Ovary (tissue), 10 donors: ENCODE measurements at regions of chr7 and their contacts with region 1.

Region 1: GRCh38 chr7:77759294-77759889 is 38.8 kb downstream of the TMEM60 start:
- DNase-seq: peak in 3 of 5 donors; percentile 41 to 78 (median 52)
- H3K4me3 ChIP-seq: no peak overlapping the region
- H3K27ac ChIP-seq: no peak overlapping the region
- H3K4me1 ChIP-seq: peaks cover 2% of the 10 kb centered on the region
- H3K27me3 ChIP-seq: no peaks in the 10 kb centered on the region
- CTCF ChIP-seq: peak; percentile 64 to 85 (median 85)
- EP300 ChIP-seq: no peak
- POLR2A ChIP-seq: no peak

Region 2: GRCh38 chr7:77651573-77652162 is 107.7 kb before region 1 on chr7:
- intact Hi-C with region 1: loop called (anchors 5 kb)
- DNase-seq: peak in 1 of 5 donors; percentile 30
- H3K4me3 ChIP-seq: no peak overlapping the region
- H3K27ac ChIP-seq: no peak overlapping the region
- H3K4me1 ChIP-seq: peaks cover 2% of the 10 kb centered on the region
- H3K27me3 ChIP-seq: no peaks in the 10 kb centered on the region
- CTCF ChIP-seq: peak; percentile 60 to 66 (median 60)
- EP300 ChIP-seq: no peak
- POLR2A ChIP-seq: no peak

Region 3: DNA sequence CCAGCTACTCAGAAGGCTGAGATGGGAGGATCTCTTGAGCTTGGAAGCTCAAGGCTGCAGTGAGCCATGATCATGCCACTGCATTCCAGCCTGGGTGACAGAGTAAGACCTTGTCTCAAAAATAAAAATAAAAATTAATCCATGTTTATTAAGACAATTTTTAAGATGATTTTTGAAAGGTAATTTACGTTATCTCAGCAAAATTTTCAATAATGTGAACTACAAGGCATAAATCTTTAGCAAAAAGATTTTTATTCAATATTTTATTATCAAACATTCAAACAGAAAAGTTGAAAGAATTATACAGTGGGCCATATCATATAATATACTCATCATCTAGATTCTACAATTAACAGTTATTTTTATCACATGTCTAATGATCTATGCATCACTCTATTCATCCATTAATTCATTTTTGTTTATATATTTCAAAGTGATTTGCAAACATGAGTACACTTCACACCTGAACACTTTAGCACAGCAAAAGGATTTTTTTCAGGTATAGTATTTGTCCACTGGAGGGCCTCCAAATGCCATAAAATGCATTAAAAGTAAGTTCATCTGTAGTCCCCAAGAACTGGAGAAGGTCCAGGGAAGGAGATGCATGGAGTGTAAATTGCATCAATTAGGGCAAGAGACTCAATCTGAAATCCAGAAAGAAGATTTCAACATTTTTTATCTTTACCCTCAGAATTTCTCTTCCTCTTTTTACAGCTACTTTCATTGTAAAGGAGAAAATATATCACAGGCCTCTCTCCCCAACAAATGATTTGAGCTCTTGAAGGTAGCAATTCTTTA is 101.8 kb before region 1 on chr7:
- intact Hi-C with region 1: loop called (anchors 5 kb)
- DNase-seq: no peak
- H3K4me3 ChIP-seq: no peak overlapping the region
- H3K27ac ChIP-seq: no peak overlapping the region
- H3K4me1 ChIP-seq: no peaks in the 10 kb centered on the region
- H3K27me3 ChIP-seq: no peaks in the 10 kb centered on the region
- CTCF ChIP-seq: peak in 1 of 3 donors; percentile 41
- EP300 ChIP-seq: no peak
- POLR2A ChIP-seq: no peak